ENCODE measurements at regions of chr2 and their contacts with region 1.

Region 1: GRCh38 chr2:171416009-171416926 is 17.5 kb downstream of the METTL8 start:
- DNase-seq: peak; percentile 95
- ATAC-seq: peak; percentile 91
- H3K4me3 ChIP-seq: no peak overlapping the region; the same call in 1 of the 2 replicates
- H3K27ac ChIP-seq: peak overlapping the region; percentile 83
- H3K4me1 ChIP-seq: peaks cover 32% of the 10 kb centered on the region
- H3K27me3 ChIP-seq: no peaks in the 10 kb centered on the region
- CTCF ChIP-seq: peak; percentile 83 to 95 (median 88); a peak in 5 of 6 replicates
- EP300 ChIP-seq: peak in 1 of 2 experiments; percentile 50; a peak in 2 of 4 replicates
- POLR2A ChIP-seq: peak; percentile 64
- RAD21 ChIP-seq: peak; percentile 97

Region 2: DNA sequence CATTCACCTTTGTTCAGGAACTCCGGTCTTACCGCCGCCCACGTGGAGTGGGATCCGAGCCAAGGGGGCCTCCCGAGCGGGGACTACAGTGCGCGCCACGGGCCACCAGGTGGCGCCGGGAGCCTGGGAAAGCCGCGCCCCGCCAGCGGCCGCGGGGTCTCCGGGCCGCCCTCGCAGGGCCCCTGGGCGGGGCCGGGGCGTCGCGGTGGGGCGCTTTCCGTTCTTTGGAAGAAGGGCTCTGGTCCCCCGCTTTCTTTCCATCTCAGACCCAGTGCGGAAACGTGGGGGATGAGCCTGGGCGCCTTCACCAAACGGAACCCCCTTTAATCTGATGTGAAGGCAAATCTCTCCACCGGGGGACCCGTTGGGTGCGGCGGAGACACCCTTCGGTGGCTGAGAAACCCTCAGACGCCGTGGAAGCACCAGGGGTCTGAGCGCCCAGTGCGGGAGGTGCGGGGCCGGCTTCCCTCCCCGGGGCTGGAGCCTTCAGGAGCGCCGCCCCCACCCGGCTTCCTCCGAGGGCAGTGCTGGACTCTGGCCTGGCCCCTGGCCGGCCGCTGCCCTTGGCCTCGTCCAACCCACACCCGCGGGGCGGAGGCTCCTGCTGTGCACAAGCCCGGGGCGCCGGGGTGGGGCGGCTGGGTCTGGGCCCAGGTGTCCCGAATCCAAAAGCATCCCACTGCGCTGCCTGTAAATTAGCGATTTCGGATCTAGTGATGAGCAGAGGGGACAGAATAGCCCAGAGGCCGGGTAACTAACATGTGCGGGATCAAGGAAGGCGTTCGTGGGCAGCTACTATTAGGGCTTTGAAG is 442.6 kb before region 1 on chr2:
- CTCF ChIA-PET with region 1: interaction called, 12 read pairs
- POLR2A ChIA-PET with region 1: no interaction called
- RAD21 ChIA-PET with region 1: interaction called, 28 read pairs
- SMC1A ChIA-PET with region 1: interaction called, 13 read pairs
- in situ Hi-C with region 1: no loop called
- intact Hi-C with region 1: loop called (anchors 1 kb)
- DNase-seq: peak; percentile 64
- ATAC-seq: peak; percentile 97
- H3K4me3 ChIP-seq: peak overlapping the region; percentile 78
- H3K27ac ChIP-seq: peak overlapping the region; percentile 72
- H3K4me1 ChIP-seq: peaks cover 10% of the 10 kb centered on the region
- H3K27me3 ChIP-seq: no peaks in the 10 kb centered on the region
- CTCF ChIP-seq: peak; percentile 88 to 96 (median 89)
- EP300 ChIP-seq: peak in 1 of 2 experiments; percentile 40; a peak in 1 of 4 replicates
- POLR2A ChIP-seq: peak; percentile 74
- RAD21 ChIP-seq: peak; percentile 90

Region 3: DNA sequence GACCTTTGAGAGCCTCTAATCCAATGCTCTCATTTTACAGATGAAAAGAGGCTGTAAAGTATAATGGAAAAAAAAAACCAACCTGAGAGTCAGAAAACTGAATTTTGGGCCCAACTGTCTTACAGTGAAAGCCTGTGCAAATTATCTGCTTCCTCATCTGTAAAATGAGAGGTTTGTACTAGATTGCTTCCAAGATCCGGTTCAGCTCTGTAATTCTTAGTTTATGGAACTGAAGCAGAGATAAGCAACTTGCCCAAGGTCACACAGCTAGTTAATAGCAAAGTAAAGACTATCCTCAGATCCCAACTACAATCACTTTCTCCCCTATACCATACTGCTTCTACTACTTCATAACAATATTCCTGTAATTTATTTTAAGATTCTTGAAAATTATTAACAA is 261.9 kb before region 1 on chr2:
- CTCF ChIA-PET with region 1: interaction called, 46 read pairs
- POLR2A ChIA-PET with region 1: interaction called, 21 read pairs
- RAD21 ChIA-PET with region 1: interaction called, 42 read pairs
- SMC1A ChIA-PET with region 1: interaction called, 65 read pairs
- in situ Hi-C with region 1: loop called (anchors 5 kb)
- intact Hi-C with region 1: loop called (anchors 1 kb)
- DNase-seq: no peak
- ATAC-seq: peak; percentile 27
- H3K4me3 ChIP-seq: peak overlapping the region; percentile 22
- H3K27ac ChIP-seq: peak overlapping the region; percentile 68
- H3K4me1 ChIP-seq: peaks cover 14% of the 10 kb centered on the region
- H3K27me3 ChIP-seq: no peaks in the 10 kb centered on the region
- CTCF ChIP-seq: no peak
- EP300 ChIP-seq: no peak
- POLR2A ChIP-seq: no peak
- RAD21 ChIP-seq: no peak

Region 4: DNA sequence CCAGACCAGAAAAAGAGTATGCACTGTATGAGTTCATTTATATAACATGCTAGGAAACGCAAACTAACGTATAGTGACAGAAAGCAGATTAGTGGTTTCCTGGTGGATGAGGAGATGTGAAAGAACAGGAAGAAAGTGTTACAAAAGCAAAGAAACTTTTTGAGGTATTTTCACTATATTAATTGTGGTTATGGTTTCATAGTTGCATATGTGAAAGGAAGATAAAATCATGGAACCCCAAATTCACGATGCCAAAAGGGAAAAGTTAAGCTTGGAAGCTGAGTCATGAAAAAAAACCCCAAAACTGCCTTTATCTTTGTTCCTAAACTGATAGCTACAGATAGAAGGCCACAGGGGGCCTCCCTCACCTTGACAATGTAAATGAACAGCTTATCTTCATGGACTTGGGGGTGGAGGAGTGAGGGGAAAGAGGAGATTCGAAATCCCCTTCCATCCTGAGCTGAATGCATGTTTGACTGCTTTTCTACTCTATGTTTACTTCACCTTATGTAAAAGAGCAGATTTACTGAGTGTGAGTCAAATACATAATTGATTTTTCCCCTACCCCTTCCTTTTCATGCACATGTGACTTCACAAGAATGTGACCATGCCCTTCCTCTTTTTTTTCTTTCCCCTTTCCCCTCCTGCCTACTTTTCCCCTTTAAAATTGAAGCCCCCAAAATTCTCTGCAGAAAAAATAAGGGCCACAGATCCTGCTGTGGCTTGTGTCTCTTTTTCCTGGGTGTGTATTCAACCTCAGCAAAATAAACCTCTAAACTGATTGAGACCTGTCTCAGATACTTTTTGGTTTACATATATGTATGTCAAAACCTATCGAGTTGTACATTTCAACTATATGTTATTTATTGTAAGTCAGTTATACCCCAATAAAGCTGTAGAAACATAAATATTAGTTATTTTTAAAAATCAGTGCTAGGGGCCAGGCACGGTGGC is 155.5 kb before region 1 on chr2:
- CTCF ChIA-PET with region 1: interaction called, 9 read pairs
- POLR2A ChIA-PET with region 1: interaction called, 4 read pairs
- RAD21 ChIA-PET with region 1: interaction called, 23 read pairs
- SMC1A ChIA-PET with region 1: interaction called, 8 read pairs
- in situ Hi-C with region 1: no loop called
- intact Hi-C with region 1: no loop called
- DNase-seq: peak; percentile 55
- ATAC-seq: peak; percentile 81
- H3K4me3 ChIP-seq: no peak overlapping the region
- H3K27ac ChIP-seq: peak overlapping the region; percentile 73
- H3K4me1 ChIP-seq: peaks cover 20% of the 10 kb centered on the region
- H3K27me3 ChIP-seq: no peaks in the 10 kb centered on the region
- CTCF ChIP-seq: peak in 2 of 3 experiments; percentile 17 to 20; a peak in 3 of 6 replicates
- EP300 ChIP-seq: no peak
- POLR2A ChIP-seq: no peak
- RAD21 ChIP-seq: peak; percentile 60

Region 5: DNA sequence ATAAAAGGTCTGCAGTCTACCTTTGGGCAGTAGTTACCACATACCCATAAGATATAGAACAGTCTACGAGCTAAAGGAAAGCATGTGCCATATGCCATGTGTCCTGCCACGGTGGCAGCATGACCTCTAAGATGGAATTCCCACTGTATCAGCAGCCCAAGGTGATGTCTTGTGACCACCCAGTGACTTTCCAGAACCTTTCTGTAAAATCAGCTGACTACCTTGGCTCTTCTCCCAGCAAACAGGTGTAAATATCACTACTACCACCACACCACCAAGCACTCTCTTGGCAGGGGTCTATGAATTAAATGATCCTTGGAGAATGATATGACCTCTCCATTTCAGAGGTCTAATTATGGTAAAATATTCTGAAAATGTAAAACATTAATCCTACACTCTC is 82.1 kb before region 1 on chr2:
- CTCF ChIA-PET with region 1: interaction called, 14 read pairs
- POLR2A ChIA-PET with region 1: interaction called, 9 read pairs
- RAD21 ChIA-PET with region 1: interaction called, 208 read pairs
- SMC1A ChIA-PET with region 1: interaction called, 273 read pairs
- in situ Hi-C with region 1: no loop called
- intact Hi-C with region 1: no loop called
- DNase-seq: no peak
- ATAC-seq: no peak
- H3K4me3 ChIP-seq: no peak overlapping the region
- H3K27ac ChIP-seq: peak overlapping the region; percentile 78
- H3K4me1 ChIP-seq: peaks cover 31% of the 10 kb centered on the region
- H3K27me3 ChIP-seq: no peaks in the 10 kb centered on the region
- CTCF ChIP-seq: no peak
- EP300 ChIP-seq: no peak
- POLR2A ChIP-seq: no peak
- RAD21 ChIP-seq: no peak

Region 6: GRCh38 chr2:171347591-171348032 is 68.7 kb before region 1 on chr2:
- CTCF ChIA-PET with region 1: interaction called, 34 read pairs
- POLR2A ChIA-PET with region 1: interaction called, 8 read pairs
- RAD21 ChIA-PET with region 1: interaction called, 54 read pairs
- SMC1A ChIA-PET with region 1: interaction called, 45 read pairs
- in situ Hi-C with region 1: no loop called
- intact Hi-C with region 1: loop called (anchors 5 kb)
- DNase-seq: no peak
- ATAC-seq: peak; percentile 60
- H3K4me3 ChIP-seq: 0 out of 2 replicates have a peak overlapping the region, but pooled peaks have one; percentile 28
- H3K27ac ChIP-seq: peak overlapping the region; percentile 81
- H3K4me1 ChIP-seq: peaks cover 29% of the 10 kb centered on the region
- H3K27me3 ChIP-seq: no peaks in the 10 kb centered on the region
- CTCF ChIP-seq: no peak
- EP300 ChIP-seq: no peak
- POLR2A ChIP-seq: no peak
- RAD21 ChIP-seq: no peak

Region 7: GRCh38 chr2:171433763-171434670 is 17.7 kb after region 1 on chr2 and contains the starts of genes DCAF17 and METTL8:
- CTCF ChIA-PET with region 1: interaction called, 32 read pairs
- POLR2A ChIA-PET with region 1: interaction called, 15 read pairs
- RAD21 ChIA-PET with region 1: interaction called, 25 read pairs
- SMC1A ChIA-PET with region 1: interaction called, 22 read pairs
- in situ Hi-C with region 1: no loop called
- intact Hi-C with region 1: loop called (anchors 1 kb)
- DNase-seq: peak; percentile 94
- ATAC-seq: peak; percentile 94
- H3K4me3 ChIP-seq: peak within 1 kb of the TSS; percentile 81
- H3K27ac ChIP-seq: peak within 1 kb of the TSS; percentile 93
- H3K4me1 ChIP-seq: peaks cover 13% of the 10 kb centered on the region
- H3K27me3 ChIP-seq: no peaks in the 10 kb centered on the region
- CTCF ChIP-seq: peak; percentile 52 to 72 (median 61)
- EP300 ChIP-seq: no peak
- POLR2A ChIP-seq: peak; percentile 92
- RAD21 ChIP-seq: peak; percentile 33
- polyA plus RNA-seq, gene DCAF17: 5.2 to 5.6 TPM
- polyA plus RNA-seq, gene METTL8: 34.9 to 42.5 TPM